ENCODE measurements at regions of chr18 and their contacts with region 1.

Region 1: GRCh38 chr18:34965108-34965507 is 76.1 kb upstream of the MAPRE2 start:
- DNase-seq: no peak
- ATAC-seq: no peak
- H3K4me3 ChIP-seq: no peak overlapping the region
- H3K27ac ChIP-seq: peak overlapping the region; percentile 99
- H3K4me1 ChIP-seq: peaks cover 29% of the 10 kb centered on the region
- H3K27me3 ChIP-seq: no peaks in the 10 kb centered on the region
- CTCF ChIP-seq: no peak

Region 2: GRCh38 chr18:34691614-34692013 is 273.5 kb before region 1 on chr18:
- intact Hi-C with region 1: no loop called
- DNase-seq: no peak
- ATAC-seq: peak in 3 of 4 donors; percentile 44 to 64 (median 57)
- H3K4me3 ChIP-seq: no peak overlapping the region
- H3K27ac ChIP-seq: no peak overlapping the region
- H3K4me1 ChIP-seq: peaks cover 38% of the 10 kb centered on the region
- H3K27me3 ChIP-seq: no peaks in the 10 kb centered on the region
- CTCF ChIP-seq: no peak

Region 3: GRCh38 chr18:34947711-34948125 is 17.4 kb before region 1 on chr18:
- intact Hi-C with region 1: loop called in 1 of 2 experiments (anchors 2 kb)
- DNase-seq: no peak
- ATAC-seq: peak; percentile 71 to 83 (median 75)
- H3K4me3 ChIP-seq: peak overlapping the region; percentile 12
- H3K27ac ChIP-seq: peak overlapping the region; percentile 77
- H3K4me1 ChIP-seq: peaks cover 13% of the 10 kb centered on the region
- H3K27me3 ChIP-seq: no peaks in the 10 kb centered on the region
- CTCF ChIP-seq: no peak

Region 4: DNA sequence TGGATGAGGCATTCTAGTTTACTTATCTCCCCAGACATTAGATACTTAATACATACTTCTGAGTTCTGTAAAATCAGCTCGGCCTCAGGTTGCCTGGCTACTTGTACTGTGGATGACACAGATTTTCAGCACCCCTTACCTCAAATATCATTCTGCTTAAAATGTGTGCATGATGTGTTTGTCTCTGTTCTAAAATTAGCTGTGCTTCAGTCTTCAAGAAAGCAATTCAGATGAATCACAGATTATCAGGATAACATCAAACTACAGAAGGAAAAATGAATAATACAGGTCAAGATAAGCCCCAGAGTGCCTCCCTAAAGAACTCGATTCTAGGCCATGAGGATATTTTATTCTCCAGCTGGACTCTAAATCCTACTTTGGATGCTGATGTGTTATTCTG is 54.8 kb after region 1 on chr18:
- intact Hi-C with region 1: no loop called
- DNase-seq: no peak
- ATAC-seq: peak; percentile 73 to 87 (median 80)
- H3K4me3 ChIP-seq: no peak overlapping the region
- H3K27ac ChIP-seq: peak overlapping the region; percentile 72
- H3K4me1 ChIP-seq: peaks cover 62% of the 10 kb centered on the region
- H3K27me3 ChIP-seq: no peaks in the 10 kb centered on the region
- CTCF ChIP-seq: no peak

Measured in psoas muscle (tissue), 8 donors.